ENCODE measurements at regions of chr11 and their contacts with region 1.

Region 1: DNA sequence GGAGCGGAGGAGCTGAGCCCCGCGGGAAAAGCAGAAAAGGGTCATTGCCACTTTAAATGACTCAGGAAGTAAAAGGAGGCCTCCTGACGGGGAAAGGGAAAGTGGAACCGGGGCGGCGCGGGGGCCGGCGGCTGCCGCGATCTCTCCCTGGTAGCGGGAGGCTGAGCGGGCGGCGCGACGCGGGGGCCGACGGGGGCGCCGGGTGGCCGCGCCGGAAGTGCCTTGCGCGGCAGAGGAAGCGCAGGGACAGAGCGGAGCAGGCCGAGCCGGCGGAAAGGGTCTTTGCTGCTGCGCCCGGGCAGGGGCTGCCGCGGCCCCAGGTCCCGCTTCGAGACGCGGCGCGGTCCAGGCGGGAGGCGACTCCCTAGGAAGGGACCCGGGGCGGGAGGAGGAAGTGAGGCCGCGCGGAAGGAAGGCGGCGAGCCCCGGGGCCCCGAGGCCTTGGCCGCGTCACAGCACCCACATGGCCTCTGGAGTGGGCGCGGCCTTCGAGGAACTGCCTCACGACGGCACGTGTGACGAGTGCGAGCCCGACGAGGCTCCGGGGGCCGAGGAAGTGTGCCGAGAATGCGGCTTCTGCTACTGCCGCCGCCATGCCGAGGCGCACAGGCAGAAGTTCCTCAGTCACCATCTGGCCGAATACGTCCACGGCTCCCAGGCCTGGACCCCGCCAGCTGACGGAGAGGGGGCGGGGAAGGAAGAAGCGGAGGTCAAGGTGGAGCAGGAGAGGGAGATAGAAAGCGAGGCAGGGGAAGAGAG is at the start of gene TRIM44:
- DNase-seq: peak; percentile 87 to 92 (median 89)
- ATAC-seq: peak; percentile 91 to 97 (median 95)
- H3K4me3 ChIP-seq: peak within 1 kb of the TSS; percentile 56 to 92 (median 78)
- H3K27ac ChIP-seq: peak within 1 kb of the TSS; percentile 89 to 99 (median 96)
- H3K4me1 ChIP-seq: peaks cover 0 to 31% (median 21%) of the 10 kb centered on the region in 12 donors
- H3K27me3 ChIP-seq: peaks cover 0 to 2% (median 0%) of the 10 kb centered on the region in 9 donors
- CTCF ChIP-seq: no peak
- POLR2A ChIP-seq: peak in 1 of 2 donors; percentile 70
- total RNA-seq, gene TRIM44: 34.5 to 55.3 (median 48.0) TPM

Region 2: DNA sequence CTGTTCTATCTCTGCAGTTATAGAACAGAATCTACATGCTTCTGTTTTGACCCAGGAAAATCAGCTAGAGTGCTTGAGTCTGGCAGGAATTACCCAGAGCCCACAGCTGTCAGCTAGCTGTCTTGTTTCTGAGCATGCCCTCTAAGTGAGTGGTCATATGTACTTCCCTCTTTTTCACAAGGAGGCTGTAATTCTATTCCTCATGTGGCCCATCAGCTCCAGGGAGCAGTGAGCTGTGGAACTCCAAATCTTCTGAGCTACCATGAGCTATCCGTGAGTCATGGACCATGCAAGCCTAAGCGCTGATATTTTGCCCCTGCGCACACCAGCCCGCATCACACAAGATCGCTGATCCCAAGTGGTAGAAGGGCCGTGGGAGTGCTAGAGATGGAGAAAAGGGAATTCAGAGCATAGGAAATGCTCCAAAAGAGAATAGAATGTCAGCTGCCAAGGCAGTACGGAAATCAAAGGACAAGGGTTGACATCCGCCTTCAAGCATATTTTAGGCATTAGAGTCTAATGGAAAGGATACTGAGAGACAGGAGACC is 39.1 kb before region 1 on chr11:
- intact Hi-C with region 1: loop called in 8 of 10 experiments (anchors 2 to 5 kb)
- DNase-seq: peak in 1 of 5 donors; percentile 35
- ATAC-seq: peak in 1 of 4 donors; percentile 53
- H3K4me3 ChIP-seq: peak overlapping the region in 1 of 12 donors; percentile 3
- H3K27ac ChIP-seq: peak overlapping the region in 1 of 12 donors; percentile 15
- H3K4me1 ChIP-seq: peaks cover 3 to 42% (median 21%) of the 10 kb centered on the region in 12 donors
- H3K27me3 ChIP-seq: peaks cover 0 to 41% (median 0%) of the 10 kb centered on the region in 9 donors
- CTCF ChIP-seq: no peak
- POLR2A ChIP-seq: no peak

Region 3: GRCh38 chr11:35943713-35944655 is 281.2 kb after region 1 on chr11 and contains the start of gene LDLRAD3:
- intact Hi-C with region 1: loop called in 1 of 10 experiments (anchors 10 kb)
- DNase-seq: peak; percentile 76 to 91 (median 82)
- ATAC-seq: peak; percentile 67 to 94 (median 92)
- H3K4me3 ChIP-seq: peak within 1 kb of the TSS; percentile 9 to 77 (median 62)
- H3K27ac ChIP-seq: peak within 1 kb of the TSS in 10 of 12 donors; percentile 25 to 68 (median 60)
- H3K4me1 ChIP-seq: peaks cover 0 to 29% (median 9%) of the 10 kb centered on the region in 12 donors
- H3K27me3 ChIP-seq: peaks cover 0 to 6% (median 0%) of the 10 kb centered on the region in 9 donors
- CTCF ChIP-seq: no peak
- POLR2A ChIP-seq: no peak
- total RNA-seq, gene LDLRAD3: 1.5 to 7.7 (median 2.6) TPM

Region 4: GRCh38 chr11:36048496-36049247 is 385.8 kb after region 1 on chr11:
- intact Hi-C with region 1: loop called in 1 of 10 experiments (anchors 5 kb)
- DNase-seq: no peak
- ATAC-seq: no peak
- H3K4me3 ChIP-seq: no peak overlapping the region
- H3K27ac ChIP-seq: no peak overlapping the region
- H3K4me1 ChIP-seq: no peaks in the 10 kb centered on the region
- H3K27me3 ChIP-seq: no peaks in the 10 kb centered on the region
- CTCF ChIP-seq: no peak
- POLR2A ChIP-seq: no peak

Measured in heart left ventricle (tissue), 16 donors.